CD14-positive monocyte (primary cell): ENCODE measurements at regions of chr11 and their contacts with region 1.

Region 1: GRCh38 chr11:75142714-75143419 is 8.0 kb upstream of the SLCO2B1 start:
- DNase-seq: peak; percentile 93 to 96 (median 95)
- H3K4me3 ChIP-seq: peak overlapping the region in 1 of 3 experiments; percentile 47
- H3K4me3 Mint-ChIP-seq: peak overlapping the region; percentile 4 to 82
- H3K27ac ChIP-seq: peak overlapping the region in 1 of 2 donors; percentile 51
- H3K27ac Mint-ChIP-seq: peak overlapping the region; percentile 77 to 96 (median 88)
- H3K4me1 ChIP-seq: peaks cover 34 to 38% of the 10 kb centered on the region in 2 donors
- H3K4me1 Mint-ChIP-seq: peaks cover 38% of the 10 kb centered on the region
- H3K27me3 ChIP-seq: no peaks in the 10 kb centered on the region
- H3K27me3 Mint-ChIP-seq: peaks cover 8 to 14% (median 8%) of the 10 kb centered on the region in 3 donors
- CTCF ChIP-seq: no peak

Region 2: GRCh38 chr11:75204685-75205563 is 62.1 kb after region 1 on chr11:
- intact Hi-C with region 1: loop called (anchors 1 kb)
- DNase-seq: peak; percentile 75 to 82 (median 79)
- H3K4me3 ChIP-seq: no peak overlapping the region
- H3K4me3 Mint-ChIP-seq: no peak overlapping the region
- H3K27ac ChIP-seq: no peak overlapping the region
- H3K27ac Mint-ChIP-seq: no peak overlapping the region
- H3K4me1 ChIP-seq: no peaks in the 10 kb centered on the region
- H3K4me1 Mint-ChIP-seq: no peaks in the 10 kb centered on the region
- H3K27me3 ChIP-seq: peaks cover 0 to 6% of the 10 kb centered on the region in 2 donors
- H3K27me3 Mint-ChIP-seq: peaks cover 10 to 15% (median 13%) of the 10 kb centered on the region in 3 donors
- CTCF ChIP-seq: peak; percentile 93

Region 3: DNA sequence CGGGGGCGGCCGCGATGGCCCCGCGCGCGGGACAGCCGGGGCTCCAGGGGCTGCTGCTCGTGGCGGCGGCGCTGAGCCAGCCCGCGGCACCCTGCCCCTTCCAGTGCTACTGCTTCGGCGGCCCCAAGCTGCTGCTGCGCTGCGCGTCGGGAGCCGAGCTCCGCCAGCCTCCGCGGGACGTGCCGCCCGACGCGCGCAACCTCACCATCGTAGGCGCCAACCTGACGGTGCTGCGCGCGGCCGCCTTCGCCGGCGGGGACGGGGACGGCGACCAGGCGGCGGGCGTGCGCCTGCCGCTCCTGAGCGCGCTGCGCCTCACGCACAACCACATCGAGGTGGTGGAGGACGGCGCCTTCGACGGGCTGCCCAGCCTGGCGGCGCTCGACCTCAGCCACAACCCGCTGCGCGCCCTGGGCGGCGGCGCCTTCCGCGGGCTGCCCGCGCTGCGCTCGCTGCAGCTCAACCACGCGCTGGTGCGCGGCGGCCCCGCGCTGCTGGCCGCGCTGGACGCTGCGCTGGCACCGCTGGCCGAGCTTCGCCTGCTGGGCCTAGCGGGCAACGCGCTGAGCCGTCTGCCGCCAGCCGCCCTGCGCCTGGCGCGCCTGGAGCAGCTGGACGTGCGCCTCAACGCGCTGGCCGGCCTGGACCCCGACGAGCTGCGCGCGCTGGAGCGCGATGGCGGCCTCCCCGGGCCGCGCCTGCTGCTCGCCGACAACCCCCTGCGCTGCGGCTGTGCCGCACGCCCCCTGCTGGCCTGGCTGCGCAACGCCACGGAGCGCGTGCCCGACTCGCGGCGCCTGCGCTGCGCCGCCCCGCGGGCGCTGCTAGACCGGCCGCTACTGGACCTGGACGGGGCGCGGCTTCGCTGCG is 98.4 kb after region 1 on chr11:
- intact Hi-C with region 1: loop called (anchors 2 to 5 kb)
- DNase-seq: peak; percentile 80 to 83 (median 83)
- H3K4me3 ChIP-seq: peak overlapping the region in 1 of 3 experiments; percentile 59
- H3K4me3 Mint-ChIP-seq: peak overlapping the region; percentile 64 to 80
- H3K27ac ChIP-seq: no peak overlapping the region
- H3K27ac Mint-ChIP-seq: no peak overlapping the region
- H3K4me1 ChIP-seq: peaks cover 8 to 22% of the 10 kb centered on the region in 2 donors
- H3K4me1 Mint-ChIP-seq: peaks cover 8% of the 10 kb centered on the region
- H3K27me3 ChIP-seq: peaks cover 44 to 66% of the 10 kb centered on the region in 2 donors
- H3K27me3 Mint-ChIP-seq: peaks cover 54 to 70% (median 68%) of the 10 kb centered on the region in 3 donors
- CTCF ChIP-seq: peak; percentile 96

Region 4: GRCh38 chr11:75248690-75249268 is 105.9 kb after region 1 on chr11:
- intact Hi-C with region 1: loop called (anchors 2 to 5 kb)
- DNase-seq: peak; percentile 80 to 88 (median 85)
- H3K4me3 ChIP-seq: no peak overlapping the region
- H3K4me3 Mint-ChIP-seq: no peak overlapping the region
- H3K27ac ChIP-seq: no peak overlapping the region
- H3K27ac Mint-ChIP-seq: no peak overlapping the region
- H3K4me1 ChIP-seq: no peaks in the 10 kb centered on the region
- H3K4me1 Mint-ChIP-seq: no peaks in the 10 kb centered on the region
- H3K27me3 ChIP-seq: peaks cover 14 to 16% of the 10 kb centered on the region in 2 donors
- H3K27me3 Mint-ChIP-seq: peaks cover 27 to 41% (median 30%) of the 10 kb centered on the region in 3 donors
- CTCF ChIP-seq: peak; percentile 99